HepG2 (cell line): ENCODE measurements at regions of chr3 and their contacts with region 1.

Region 1: GRCh38 chr3:48356420-48356819 is 15.6 kb upstream of the FBXW12 start:
- DNase-seq: peak; percentile 38
- ATAC-seq: peak; percentile 85
- H3K4me3 ChIP-seq: no peak overlapping the region
- H3K27ac ChIP-seq: no peak overlapping the region
- H3K4me1 ChIP-seq: peaks cover 26% of the 10 kb centered on the region
- H3K27me3 ChIP-seq: 0 out of 5 replicates have a peak, but pooled peaks cover 0 to 4% of the 10 kb centered on the region in 2 experiments
- CTCF ChIP-seq: no peak
- EP300 ChIP-seq: no peak
- POLR2A ChIP-seq: no peak
- RAD21 ChIP-seq: no peak

Region 2: GRCh38 chr3:47996440-47996839 is 360.0 kb before region 1 on chr3:
- CTCF ChIA-PET with region 1: no interaction called
- POLR2A ChIA-PET with region 1: no interaction called
- in situ Hi-C with region 1: no loop called
- intact Hi-C with region 1: no loop called
- DNase-seq: no peak
- ATAC-seq: no peak
- H3K4me3 ChIP-seq: no peak overlapping the region
- H3K27ac ChIP-seq: no peak overlapping the region
- H3K4me1 ChIP-seq: peaks cover 14% of the 10 kb centered on the region
- H3K27me3 ChIP-seq: no peaks in the 10 kb centered on the region
- CTCF ChIP-seq: no peak
- EP300 ChIP-seq: no peak
- POLR2A ChIP-seq: no peak
- RAD21 ChIP-seq: no peak

Region 3: DNA sequence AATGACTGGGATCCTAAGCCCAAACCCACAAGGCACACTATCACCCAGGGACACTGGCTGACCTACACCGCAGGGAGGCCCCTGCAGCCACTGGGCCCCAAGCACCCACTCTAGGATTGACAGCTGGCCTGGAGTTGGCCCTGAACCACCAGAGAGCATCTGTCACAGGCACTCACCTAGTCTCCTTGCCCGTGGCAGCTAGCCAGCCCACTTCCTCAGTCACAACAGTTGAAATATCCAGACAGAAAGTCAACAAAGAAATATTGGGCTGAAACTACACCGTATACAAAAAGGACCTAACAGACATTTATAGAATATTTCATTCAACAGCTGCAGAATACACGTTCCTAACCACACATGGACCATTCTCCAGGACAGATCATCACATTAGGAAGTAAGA is 17.8 kb before region 1 on chr3:
- CTCF ChIA-PET with region 1: no interaction called
- POLR2A ChIA-PET with region 1: no interaction called
- in situ Hi-C with region 1: no loop called
- intact Hi-C with region 1: loop called (anchors 1 kb)
- DNase-seq: no peak
- ATAC-seq: no peak
- H3K4me3 ChIP-seq: no peak overlapping the region
- H3K27ac ChIP-seq: no peak overlapping the region
- H3K4me1 ChIP-seq: no peaks in the 10 kb centered on the region
- H3K27me3 ChIP-seq: peaks cover 0 to 14% of the 10 kb centered on the region in 2 experiments; a peak in 2 of 5 replicates
- CTCF ChIP-seq: no peak
- EP300 ChIP-seq: no peak
- POLR2A ChIP-seq: no peak
- RAD21 ChIP-seq: no peak